ENCODE measurements at regions of chr1 and their contacts with region 1.

Region 1: GRCh38 chr1:220013497-220013896 is 32.8 kb downstream of the EPRS1 start:
- DNase-seq: no peak
- H3K4me3 ChIP-seq: no peak overlapping the region
- H3K27ac ChIP-seq: peak overlapping the region in 1 of 4 donors; percentile 53
- H3K4me1 ChIP-seq: peaks cover 0 to 6% (median 0%) of the 10 kb centered on the region in 4 donors
- H3K27me3 ChIP-seq: no peaks in the 10 kb centered on the region
- CTCF ChIP-seq: no peak
- EP300 ChIP-seq: no peak
- POLR2A ChIP-seq: no peak

Region 2: DNA sequence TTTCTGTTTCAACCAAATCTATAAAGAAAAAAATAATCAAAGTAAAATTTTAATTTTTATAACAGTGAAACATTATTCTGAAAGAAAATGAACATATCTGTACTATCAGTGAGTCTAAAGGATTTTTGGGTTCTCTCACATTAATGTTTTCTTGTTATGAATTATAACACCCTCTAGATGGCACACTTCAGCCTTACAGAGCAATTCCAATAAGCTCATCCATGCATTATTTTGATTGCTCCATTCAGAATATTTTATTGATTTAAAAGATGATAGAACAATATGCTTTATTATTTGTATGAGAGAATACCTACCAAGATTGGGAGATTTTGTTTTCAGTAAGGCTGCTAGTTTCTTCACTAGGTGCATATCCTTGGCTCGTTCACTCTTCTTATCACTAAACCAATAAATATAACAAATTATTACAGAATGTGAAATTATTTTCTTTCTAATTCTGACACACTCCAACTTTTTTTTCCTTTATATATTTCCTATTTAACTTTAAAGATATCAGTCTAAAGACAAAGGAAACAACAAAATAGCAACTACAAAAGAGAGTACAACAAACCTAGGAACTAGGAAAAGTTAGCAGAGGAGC is 176.4 kb after region 1 on chr1:
- intact Hi-C with region 1: loop called (anchors 10 kb)
- DNase-seq: no peak
- H3K4me3 ChIP-seq: no peak overlapping the region
- H3K27ac ChIP-seq: no peak overlapping the region
- H3K4me1 ChIP-seq: no peaks in the 10 kb centered on the region
- H3K27me3 ChIP-seq: no peaks in the 10 kb centered on the region
- CTCF ChIP-seq: peak in 2 of 3 experiments; percentile 12 to 43
- EP300 ChIP-seq: no peak
- POLR2A ChIP-seq: no peak

Region 3: GRCh38 chr1:220803401-220804201 is 790.1 kb after region 1 on chr1:
- intact Hi-C with region 1: no loop called
- DNase-seq: no peak
- H3K4me3 ChIP-seq: peak overlapping the region in 1 of 4 donors; percentile 18
- H3K27ac ChIP-seq: peak overlapping the region; percentile 67 to 82 (median 78)
- H3K4me1 ChIP-seq: peaks cover 0 to 31% (median 27%) of the 10 kb centered on the region in 4 donors
- H3K27me3 ChIP-seq: no peaks in the 10 kb centered on the region
- CTCF ChIP-seq: peak; percentile 78 to 89 (median 79)
- EP300 ChIP-seq: no peak
- POLR2A ChIP-seq: no peak